CD8-positive, alpha-beta T cell (primary cell): ENCODE measurements at regions of chr2 and their contacts with region 1.

Region 1: DNA sequence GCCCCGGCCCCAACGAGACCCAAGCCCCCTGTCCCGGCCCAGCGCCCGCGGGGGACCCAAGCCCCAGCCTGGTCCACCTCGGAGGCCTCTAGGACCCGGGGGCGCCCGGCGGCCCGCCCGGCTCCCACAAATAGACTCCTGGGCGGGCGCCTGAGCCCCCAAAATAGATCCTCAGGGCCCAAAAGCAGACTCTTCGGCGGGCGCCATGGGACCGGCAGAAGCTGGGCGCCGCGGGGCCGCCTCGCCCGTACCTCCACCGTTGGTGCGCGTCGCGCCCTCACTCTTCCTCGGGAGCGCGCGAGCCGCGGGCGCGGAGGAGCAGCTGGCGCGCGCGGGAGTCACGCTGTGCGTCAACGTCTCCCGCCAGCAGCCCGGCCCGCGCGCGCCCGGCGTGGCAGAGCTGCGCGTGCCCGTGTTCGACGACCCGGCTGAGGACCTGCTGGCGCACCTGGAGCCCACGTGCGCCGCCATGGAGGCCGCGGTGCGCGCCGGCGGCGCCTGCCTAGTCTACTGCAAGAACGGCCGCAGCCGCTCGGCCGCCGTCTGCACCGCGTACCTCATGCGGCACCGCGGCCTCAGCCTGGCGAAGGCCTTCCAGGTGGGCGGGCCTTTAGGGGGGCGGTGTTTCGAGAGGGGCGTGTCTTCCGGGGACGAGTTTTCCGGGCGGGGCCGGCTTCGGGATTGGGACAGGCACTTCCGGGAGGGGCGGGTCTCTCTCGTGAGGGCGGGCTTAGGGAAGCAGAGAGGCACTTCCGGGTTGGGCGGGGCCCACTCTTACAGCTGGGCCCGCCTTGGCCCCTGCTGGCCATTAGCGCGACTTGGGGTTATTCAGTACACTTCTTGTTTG is 546 bp downstream of the DUSP28 start:
- DNase-seq: peak; percentile 98 to 100 (median 100)
- ATAC-seq: peak; percentile 59
- H3K4me3 ChIP-seq: peak overlapping the region; percentile 74 to 76
- H3K4me3 Mint-ChIP-seq: peak overlapping the region; percentile 89
- H3K27ac ChIP-seq: peak overlapping the region; percentile 82 to 84
- H3K27ac Mint-ChIP-seq: peak overlapping the region; percentile 96
- H3K4me1 ChIP-seq: peaks cover 80% of the 10 kb centered on the region
- H3K4me1 Mint-ChIP-seq: peaks cover 71% of the 10 kb centered on the region
- H3K27me3 ChIP-seq: no peaks in the 10 kb centered on the region
- H3K27me3 Mint-ChIP-seq: no peaks in the 10 kb centered on the region
- CTCF ChIP-seq: no peak

Region 2: DNA sequence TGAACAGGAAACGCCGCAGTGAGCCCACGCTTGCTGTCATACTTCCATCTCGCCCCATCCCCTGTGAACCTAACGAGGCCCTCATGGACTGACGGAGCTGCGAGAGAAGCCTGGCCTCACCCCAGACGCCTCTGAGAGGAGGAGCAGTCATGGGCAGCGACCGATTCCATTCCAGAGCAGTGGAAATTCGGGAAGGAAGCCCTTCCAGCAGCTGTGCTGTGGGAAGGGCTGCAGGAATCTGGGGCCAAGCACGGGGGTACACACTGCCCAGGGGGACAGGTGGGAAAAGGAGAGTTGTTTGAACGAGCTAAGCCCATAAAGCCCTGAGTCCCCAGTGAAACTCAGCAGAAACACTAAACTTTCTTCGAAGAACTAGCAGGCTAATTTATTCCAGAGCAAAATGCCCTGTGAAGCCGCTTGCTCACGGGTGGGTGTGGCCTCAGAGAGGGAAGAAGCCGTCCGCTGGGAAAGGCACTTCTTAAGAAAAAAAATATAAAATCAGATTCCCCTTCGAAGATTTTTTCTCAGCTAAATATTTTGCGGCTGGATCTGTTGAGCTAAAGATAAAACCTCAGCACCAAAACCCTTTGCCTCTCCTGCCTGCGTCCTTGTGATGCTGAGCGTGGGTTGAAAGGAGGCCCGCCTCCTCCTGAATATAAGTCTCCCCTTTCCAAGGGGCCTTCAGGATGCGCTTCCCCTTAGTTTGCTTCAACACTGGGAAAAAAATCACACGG is 41.1 kb before region 1 on chr2:
- CTCF ChIA-PET with region 1: interaction called, 21 read pairs
- POLR2A ChIA-PET with region 1: interaction called, 3 read pairs
- intact Hi-C with region 1: loop called in 1 of 2 experiments (anchors 5 kb)
- DNase-seq: peak in 1 of 9 experiments; percentile 41
- ATAC-seq: no peak
- H3K4me3 ChIP-seq: no peak overlapping the region
- H3K4me3 Mint-ChIP-seq: no peak overlapping the region
- H3K27ac ChIP-seq: no peak overlapping the region
- H3K27ac Mint-ChIP-seq: no peak overlapping the region
- H3K4me1 ChIP-seq: no peaks in the 10 kb centered on the region
- H3K4me1 Mint-ChIP-seq: peaks cover 3% of the 10 kb centered on the region
- H3K27me3 ChIP-seq: no peaks in the 10 kb centered on the region
- H3K27me3 Mint-ChIP-seq: no peaks in the 10 kb centered on the region
- CTCF ChIP-seq: no peak

Region 3: GRCh38 chr2:240586198-240586918 is 25.7 kb after region 1 on chr2 and contains the start of gene CAPN10:
- CTCF ChIA-PET with region 1: interaction called, 37 read pairs
- POLR2A ChIA-PET with region 1: interaction called, 88 read pairs
- intact Hi-C with region 1: loop called (anchors 1 kb)
- DNase-seq: peak; percentile 92 to 98 (median 97)
- ATAC-seq: peak; percentile 80
- H3K4me3 ChIP-seq: peak within 1 kb of the TSS; percentile 82 to 95
- H3K4me3 Mint-ChIP-seq: peak within 1 kb of the TSS; percentile 88
- H3K27ac ChIP-seq: peak within 1 kb of the TSS; percentile 86 to 90
- H3K27ac Mint-ChIP-seq: peak within 1 kb of the TSS; percentile 94
- H3K4me1 ChIP-seq: peaks cover 37% of the 10 kb centered on the region
- H3K4me1 Mint-ChIP-seq: peaks cover 57% of the 10 kb centered on the region
- H3K27me3 ChIP-seq: no peaks in the 10 kb centered on the region
- H3K27me3 Mint-ChIP-seq: no peaks in the 10 kb centered on the region
- CTCF ChIP-seq: no peak
- total RNA-seq, gene CAPN10: 65.9 to 68.9 TPM

Region 4: GRCh38 chr2:241102239-241102803 is 541.6 kb after region 1 on chr2 and contains the start of gene MTERF4:
- CTCF ChIA-PET with region 1: no interaction called
- POLR2A ChIA-PET with region 1: no interaction called
- intact Hi-C with region 1: loop called in 1 of 2 experiments (anchors 10 kb)
- DNase-seq: peak; percentile 74 to 95 (median 88)
- ATAC-seq: peak; percentile 85
- H3K4me3 ChIP-seq: peak within 1 kb of the TSS; percentile 74 to 83
- H3K4me3 Mint-ChIP-seq: peak within 1 kb of the TSS; percentile 95
- H3K27ac ChIP-seq: peak within 1 kb of the TSS; percentile 86 to 94
- H3K27ac Mint-ChIP-seq: peak within 1 kb of the TSS; percentile 98
- H3K4me1 ChIP-seq: peaks cover 71% of the 10 kb centered on the region
- H3K4me1 Mint-ChIP-seq: peaks cover 84% of the 10 kb centered on the region
- H3K27me3 ChIP-seq: no peaks in the 10 kb centered on the region
- H3K27me3 Mint-ChIP-seq: no peaks in the 10 kb centered on the region
- CTCF ChIP-seq: no peak
- total RNA-seq, gene MTERF4: 100.0 to 102 TPM

Region 5: GRCh38 chr2:241609859-241610793 is 1049.4 kb after region 1 on chr2:
- CTCF ChIA-PET with region 1: no interaction called
- POLR2A ChIA-PET with region 1: no interaction called
- intact Hi-C with region 1: loop called in 1 of 2 experiments (anchors 10 kb)
- DNase-seq: peak; percentile 81 to 96 (median 92)
- ATAC-seq: peak; percentile 99
- H3K4me3 ChIP-seq: peak overlapping the region; percentile 53 to 59
- H3K4me3 Mint-ChIP-seq: peak overlapping the region; percentile 63
- H3K27ac ChIP-seq: peak overlapping the region; percentile 51 to 77
- H3K27ac Mint-ChIP-seq: peak overlapping the region; percentile 72
- H3K4me1 ChIP-seq: peaks cover 23% of the 10 kb centered on the region
- H3K4me1 Mint-ChIP-seq: peaks cover 26% of the 10 kb centered on the region
- H3K27me3 ChIP-seq: no peaks in the 10 kb centered on the region
- H3K27me3 Mint-ChIP-seq: no peaks in the 10 kb centered on the region
- CTCF ChIP-seq: peak; percentile 63